ENCODE measurements at regions of chr15 and their contacts with region 1.

Region 1: DNA sequence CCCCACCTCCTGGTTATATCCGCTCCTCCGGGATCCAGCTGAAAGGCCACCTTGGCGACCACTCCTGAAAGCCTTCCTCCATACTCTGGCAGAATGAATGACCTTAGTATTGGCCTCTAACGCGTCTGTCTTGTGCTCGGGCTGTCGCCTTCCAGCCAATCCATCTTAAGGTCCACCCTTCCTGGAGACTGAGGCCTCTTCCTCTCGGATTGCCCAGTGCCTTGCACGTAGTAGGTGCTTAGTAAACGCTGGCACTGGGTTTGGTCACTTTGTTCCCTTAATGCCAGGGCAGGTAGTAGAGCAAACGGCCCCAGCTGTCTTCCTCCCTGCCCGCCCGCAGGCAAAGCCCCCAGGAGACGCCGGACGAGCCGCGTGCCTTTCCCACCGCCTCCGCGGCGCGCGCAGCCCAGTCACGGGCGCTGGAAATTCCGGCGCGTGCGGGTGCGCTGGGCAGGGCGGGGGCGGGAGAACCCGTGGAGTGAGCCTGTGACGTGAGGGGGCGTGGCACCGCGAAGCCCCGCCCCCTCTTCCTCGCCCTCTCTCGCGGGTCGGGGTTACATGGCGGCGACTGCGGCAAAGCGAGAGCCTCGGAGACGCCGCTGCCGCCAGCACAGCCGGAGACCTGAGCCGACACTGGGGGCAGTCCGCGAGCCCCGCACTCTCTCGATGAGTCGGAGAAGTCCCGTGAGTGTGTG is at the start of gene MAPK6:
- DNase-seq: peak; percentile 78 to 97
- H3K4me3 ChIP-seq: peak within 1 kb of the TSS; percentile 71 to 82
- H3K27ac ChIP-seq: peak within 1 kb of the TSS; percentile 88 to 92
- H3K4me1 ChIP-seq: peaks cover 5 to 13% of the 10 kb centered on the region in 2 donors
- H3K27me3 ChIP-seq: no peaks in the 10 kb centered on the region
- CTCF ChIP-seq: no peak
- total RNA-seq, gene MAPK6: 32.1 TPM

Region 2: DNA sequence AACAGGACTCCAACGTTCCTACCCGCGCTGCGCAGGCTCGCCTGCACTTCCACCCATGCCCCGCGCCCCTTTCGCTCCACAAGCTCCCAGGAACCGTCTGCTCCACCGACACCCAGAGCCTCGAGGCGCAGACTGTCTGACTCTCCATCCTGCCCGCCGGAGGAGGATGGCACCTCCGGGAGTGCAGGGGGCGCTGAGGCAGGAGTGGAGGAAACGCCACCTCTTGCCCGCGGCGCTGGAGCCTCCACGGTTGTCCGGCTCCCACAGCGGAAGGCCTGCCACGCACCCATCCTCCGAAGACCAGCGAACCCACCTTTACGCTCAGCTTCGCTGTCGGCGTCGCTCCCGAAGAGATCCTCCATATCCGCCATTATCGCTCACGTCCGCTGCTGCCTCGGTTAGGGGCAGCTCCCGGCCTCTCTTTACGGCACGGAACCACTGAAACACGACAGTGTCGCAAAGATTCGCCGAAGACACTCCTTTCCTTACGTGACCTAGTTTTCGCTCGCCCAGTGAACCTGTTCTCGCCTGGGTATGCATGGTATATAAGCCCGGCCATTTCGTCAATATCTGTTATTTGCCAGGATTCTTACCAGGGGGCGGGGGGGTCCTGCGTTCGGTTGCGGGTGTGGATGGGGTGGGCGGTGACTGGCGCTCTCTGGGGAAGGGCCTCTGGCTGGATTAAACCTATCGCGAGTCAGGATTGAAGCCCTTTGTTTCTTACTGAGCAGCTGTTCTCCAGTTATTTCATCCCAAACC is 47.3 kb before region 1 on chr15 and contains the start of gene LEO1:
- intact Hi-C with region 1: loop called (anchors 1 kb)
- DNase-seq: peak; percentile 63 to 95
- H3K4me3 ChIP-seq: peak within 1 kb of the TSS; percentile 69 to 84
- H3K27ac ChIP-seq: peak within 1 kb of the TSS; percentile 78 to 90
- H3K4me1 ChIP-seq: peaks cover 0 to 5% of the 10 kb centered on the region in 2 donors
- H3K27me3 ChIP-seq: no peaks in the 10 kb centered on the region
- CTCF ChIP-seq: peak in 2 of 3 experiments; percentile 48 to 56
- total RNA-seq, gene LEO1: 1.8 TPM

Region 3: GRCh38 chr15:52093539-52094502 is 75.0 kb after region 1 on chr15:
- intact Hi-C with region 1: loop called (anchors 5 kb)
- DNase-seq: peak in 1 of 2 donors; percentile 75
- H3K4me3 ChIP-seq: peak overlapping the region in 1 of 2 donors; percentile 7
- H3K27ac ChIP-seq: peak overlapping the region; percentile 77 to 78
- H3K4me1 ChIP-seq: peaks cover 9 to 19% of the 10 kb centered on the region in 2 donors
- H3K27me3 ChIP-seq: no peaks in the 10 kb centered on the region
- CTCF ChIP-seq: no peak

Region 4: GRCh38 chr15:52179278-52180195 is 160.7 kb after region 1 on chr15:
- intact Hi-C with region 1: loop called (anchors 2 kb)
- DNase-seq: peak; percentile 47 to 91
- H3K4me3 ChIP-seq: peak overlapping the region; percentile 95 to 99
- H3K27ac ChIP-seq: peak overlapping the region; percentile 88 to 95
- H3K4me1 ChIP-seq: peaks cover 0 to 3% of the 10 kb centered on the region in 2 donors
- H3K27me3 ChIP-seq: no peaks in the 10 kb centered on the region
- CTCF ChIP-seq: no peak

Region 5: GRCh38 chr15:52558196-52558595 is 539.4 kb after region 1 on chr15:
- intact Hi-C with region 1: no loop called
- DNase-seq: no peak
- H3K4me3 ChIP-seq: no peak overlapping the region
- H3K27ac ChIP-seq: no peak overlapping the region
- H3K4me1 ChIP-seq: peaks cover 3 to 16% of the 10 kb centered on the region in 2 donors
- H3K27me3 ChIP-seq: no peaks in the 10 kb centered on the region
- CTCF ChIP-seq: no peak

Measured in ascending aorta (tissue), 2 donors.